A549 (cell line): ENCODE measurements at regions of chr12 and their contacts with region 1.

Region 1: DNA sequence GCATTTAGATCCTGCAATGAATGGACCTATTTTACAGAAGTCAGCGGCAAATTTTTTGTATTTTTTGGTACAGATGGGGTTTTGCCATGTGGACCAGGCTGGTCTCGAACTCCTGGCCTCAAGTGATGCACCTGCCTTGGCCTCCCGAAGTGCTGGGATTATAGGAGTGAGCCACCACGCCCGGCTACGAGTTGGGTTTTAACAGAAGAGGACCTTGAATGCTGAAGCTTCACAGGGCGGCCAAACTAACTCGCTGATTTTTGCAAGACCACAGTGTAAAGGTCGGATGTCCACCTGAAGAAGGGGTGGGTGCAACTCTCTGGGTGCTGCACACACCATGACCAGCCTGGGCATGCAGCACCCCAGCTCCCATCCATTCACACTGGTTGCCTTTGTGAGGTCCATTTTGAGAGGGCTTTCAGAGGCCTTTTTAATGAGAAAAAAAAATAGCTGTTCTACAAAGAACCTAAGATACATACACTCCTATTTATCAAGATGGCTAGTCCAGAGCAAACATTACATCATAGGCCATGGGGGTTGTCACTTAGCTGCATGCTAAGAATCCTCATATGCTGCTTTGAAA is 21.6 kb upstream of the CDK2AP1 start:
- DNase-seq: no peak
- ATAC-seq: no peak; a peak in 1 of 6 replicates
- H3K4me3 ChIP-seq: no peak overlapping the region
- H3K27ac ChIP-seq: no peak overlapping the region
- H3K4me1 ChIP-seq: no peaks in the 10 kb centered on the region
- CTCF ChIP-seq: no peak
- EP300 ChIP-seq: no peak
- POLR2A ChIP-seq: no peak
- RAD21 ChIP-seq: no peak

Region 2: DNA sequence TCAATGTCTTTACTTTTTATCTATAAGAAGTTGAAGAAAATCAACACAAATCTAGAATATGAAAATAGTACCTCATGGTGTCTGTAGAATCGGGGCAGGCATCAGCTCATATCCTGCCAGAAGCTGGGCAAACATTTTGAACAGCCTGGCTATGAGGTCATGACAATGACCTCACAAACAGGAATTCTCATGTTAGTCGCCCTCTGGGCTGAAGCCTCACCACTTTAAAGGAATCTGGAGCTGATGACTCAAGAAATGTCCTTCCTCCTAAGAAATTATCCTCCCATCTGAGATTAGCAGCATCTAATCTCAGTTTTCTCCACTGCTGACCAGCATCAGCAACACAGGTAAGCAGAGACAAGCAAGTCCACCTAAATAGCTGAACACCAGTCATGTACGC is 898.0 kb before region 1 on chr12:
- CTCF ChIA-PET with region 1: no interaction called
- POLR2A ChIA-PET with region 1: no interaction called
- DNase-seq: peak; percentile 44 to 81
- ATAC-seq: peak; percentile 43 to 54; a peak in 4 of 6 replicates
- H3K4me3 ChIP-seq: peak overlapping the region; percentile 14; the same call in 1 of the 3 replicates
- H3K27ac ChIP-seq: peak overlapping the region; percentile 40 to 98
- H3K4me1 ChIP-seq: peaks cover 52% of the 10 kb centered on the region
- CTCF ChIP-seq: no peak
- EP300 ChIP-seq: no peak
- POLR2A ChIP-seq: no peak
- RAD21 ChIP-seq: no peak

Region 3: GRCh38 chr12:123305136-123305535 is 11.9 kb after region 1 on chr12:
- CTCF ChIA-PET with region 1: interaction called, 10 read pairs
- POLR2A ChIA-PET with region 1: no interaction called
- DNase-seq: no peak
- ATAC-seq: no peak
- H3K4me3 ChIP-seq: no peak overlapping the region
- H3K27ac ChIP-seq: no peak overlapping the region
- H3K4me1 ChIP-seq: no peaks in the 10 kb centered on the region
- CTCF ChIP-seq: no peak
- EP300 ChIP-seq: no peak
- POLR2A ChIP-seq: no peak
- RAD21 ChIP-seq: no peak